Heart left ventricle (tissue), 16 donors: ENCODE measurements at regions of chr2 and their contacts with region 1.

Region 1: GRCh38 chr2:190534310-190535120 is at the start of gene NEMP2:
- DNase-seq: peak; percentile 85 to 92 (median 87)
- ATAC-seq: peak; percentile 76 to 95 (median 90)
- H3K4me3 ChIP-seq: peak within 1 kb of the TSS; percentile 67 to 95 (median 79)
- H3K27ac ChIP-seq: peak within 1 kb of the TSS; percentile 92 to 99 (median 98)
- H3K4me1 ChIP-seq: peaks cover 0 to 41% (median 13%) of the 10 kb centered on the region in 12 donors
- H3K27me3 ChIP-seq: no peaks in the 10 kb centered on the region
- CTCF ChIP-seq: peak in 2 of 12 donors; percentile 10 to 16
- POLR2A ChIP-seq: peak in 1 of 2 donors; percentile 72
- total RNA-seq, gene NEMP2: 0.63 to 4.6 (median 2.4) TPM

Region 2: DNA sequence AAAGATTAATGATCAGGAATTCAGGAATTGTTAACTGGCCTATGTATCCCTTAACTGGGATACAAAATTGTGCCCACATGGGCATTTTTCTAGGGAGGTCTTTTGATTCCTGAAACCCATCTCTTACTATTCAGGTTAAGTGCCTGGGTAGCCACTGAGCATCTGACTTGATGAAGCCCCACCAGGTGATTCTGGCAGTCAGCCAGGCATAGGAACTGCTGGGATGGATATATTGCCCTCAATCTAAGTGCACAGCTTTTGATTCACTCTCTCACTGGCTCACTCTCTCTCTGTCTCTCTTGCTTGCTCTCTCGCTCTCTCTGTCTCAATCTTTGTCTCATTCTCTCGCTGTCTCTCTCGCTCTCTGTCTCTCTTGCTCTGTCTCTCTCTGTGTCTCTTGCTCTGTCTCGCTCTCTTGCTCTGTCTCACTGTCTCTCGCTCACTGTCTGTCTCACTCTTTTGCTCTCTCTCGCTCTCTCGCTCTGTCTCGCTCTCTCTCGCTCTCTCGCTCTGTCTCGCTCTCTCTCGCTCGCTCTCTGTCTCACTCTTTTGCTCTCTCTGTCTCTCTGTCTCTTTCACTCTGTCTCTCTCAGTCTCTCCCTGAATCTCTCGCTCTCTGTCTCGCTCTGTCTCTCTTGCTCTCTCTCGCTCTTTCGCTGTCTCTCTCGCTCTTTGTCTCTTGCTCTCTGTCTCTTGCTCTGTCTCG is 168.9 kb before region 1 on chr2:
- intact Hi-C with region 1: no loop called
- DNase-seq: no peak
- ATAC-seq: no peak
- H3K4me3 ChIP-seq: no peak overlapping the region
- H3K27ac ChIP-seq: no peak overlapping the region
- H3K4me1 ChIP-seq: peaks cover 0 to 2% (median 0%) of the 10 kb centered on the region in 12 donors
- H3K27me3 ChIP-seq: no peaks in the 10 kb centered on the region
- CTCF ChIP-seq: no peak
- POLR2A ChIP-seq: no peak

Region 3: DNA sequence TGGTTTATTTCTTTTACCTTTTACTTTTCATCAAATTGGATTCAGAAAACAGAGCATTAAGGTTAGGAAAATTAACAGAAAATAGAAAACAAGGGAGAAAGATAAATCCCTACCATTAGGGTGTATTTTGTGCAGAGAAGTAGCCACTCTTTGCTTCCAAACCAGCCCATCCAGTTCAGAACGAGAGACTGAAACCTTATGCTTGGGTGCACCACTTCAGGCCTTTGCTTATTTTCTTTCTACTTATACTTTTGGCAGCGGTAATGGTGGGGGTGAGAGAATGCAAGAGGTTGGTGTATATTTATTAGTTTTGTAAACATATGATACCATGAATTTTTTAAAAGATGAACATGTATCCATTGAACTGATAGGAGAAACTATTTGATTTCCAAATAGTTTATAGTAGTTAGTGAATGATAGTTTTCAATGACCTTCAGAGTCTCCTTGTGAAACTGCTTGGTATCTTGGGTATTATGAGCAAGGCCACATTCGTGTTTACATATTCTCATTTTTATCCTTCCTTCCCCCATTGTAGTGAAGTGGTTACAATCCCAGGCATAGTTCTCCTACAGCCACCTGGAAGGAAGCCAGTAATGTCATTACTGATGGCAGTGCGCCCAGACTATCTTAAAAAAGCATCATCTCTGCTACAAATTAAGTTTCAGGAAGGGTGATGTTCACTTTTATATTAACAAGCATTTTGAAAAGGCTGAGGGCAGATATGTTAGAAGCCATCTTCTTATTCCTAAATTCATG is 65.5 kb before region 1 on chr2:
- intact Hi-C with region 1: loop called in 1 of 10 experiments (anchors 2 kb)
- DNase-seq: peak; percentile 72 to 87 (median 82)
- ATAC-seq: peak; percentile 82 to 90 (median 86)
- H3K4me3 ChIP-seq: peak overlapping the region in 5 of 12 donors; percentile 7 to 27 (median 7)
- H3K27ac ChIP-seq: peak overlapping the region; percentile 69 to 91 (median 82)
- H3K4me1 ChIP-seq: peaks cover 17 to 59% (median 40%) of the 10 kb centered on the region in 12 donors
- H3K27me3 ChIP-seq: no peaks in the 10 kb centered on the region
- CTCF ChIP-seq: no peak
- POLR2A ChIP-seq: no peak

Region 4: GRCh38 chr2:190571686-190572085 is 37.2 kb after region 1 on chr2:
- intact Hi-C with region 1: loop called in 2 of 10 experiments (anchors 5 kb)
- DNase-seq: no peak
- ATAC-seq: no peak
- H3K4me3 ChIP-seq: no peak overlapping the region
- H3K27ac ChIP-seq: no peak overlapping the region
- H3K4me1 ChIP-seq: peaks cover 0 to 15% (median 0%) of the 10 kb centered on the region in 12 donors
- H3K27me3 ChIP-seq: no peaks in the 10 kb centered on the region
- CTCF ChIP-seq: no peak
- POLR2A ChIP-seq: no peak

Region 5: GRCh38 chr2:190578158-190579057 is 43.9 kb after region 1 on chr2:
- intact Hi-C with region 1: loop called in 6 of 10 experiments (anchors 2 to 5 kb)
- DNase-seq: peak in 4 of 5 donors; percentile 36 to 56 (median 50)
- ATAC-seq: peak; percentile 71 to 82 (median 76)
- H3K4me3 ChIP-seq: peak overlapping the region in 2 of 12 donors; percentile 1 to 4
- H3K27ac ChIP-seq: peak overlapping the region in 11 of 12 donors; percentile 26 to 68 (median 57)
- H3K4me1 ChIP-seq: peaks cover 0 to 61% (median 33%) of the 10 kb centered on the region in 12 donors
- H3K27me3 ChIP-seq: no peaks in the 10 kb centered on the region
- CTCF ChIP-seq: peak in 2 of 12 donors; percentile 6 to 10
- POLR2A ChIP-seq: no peak

Region 6: DNA sequence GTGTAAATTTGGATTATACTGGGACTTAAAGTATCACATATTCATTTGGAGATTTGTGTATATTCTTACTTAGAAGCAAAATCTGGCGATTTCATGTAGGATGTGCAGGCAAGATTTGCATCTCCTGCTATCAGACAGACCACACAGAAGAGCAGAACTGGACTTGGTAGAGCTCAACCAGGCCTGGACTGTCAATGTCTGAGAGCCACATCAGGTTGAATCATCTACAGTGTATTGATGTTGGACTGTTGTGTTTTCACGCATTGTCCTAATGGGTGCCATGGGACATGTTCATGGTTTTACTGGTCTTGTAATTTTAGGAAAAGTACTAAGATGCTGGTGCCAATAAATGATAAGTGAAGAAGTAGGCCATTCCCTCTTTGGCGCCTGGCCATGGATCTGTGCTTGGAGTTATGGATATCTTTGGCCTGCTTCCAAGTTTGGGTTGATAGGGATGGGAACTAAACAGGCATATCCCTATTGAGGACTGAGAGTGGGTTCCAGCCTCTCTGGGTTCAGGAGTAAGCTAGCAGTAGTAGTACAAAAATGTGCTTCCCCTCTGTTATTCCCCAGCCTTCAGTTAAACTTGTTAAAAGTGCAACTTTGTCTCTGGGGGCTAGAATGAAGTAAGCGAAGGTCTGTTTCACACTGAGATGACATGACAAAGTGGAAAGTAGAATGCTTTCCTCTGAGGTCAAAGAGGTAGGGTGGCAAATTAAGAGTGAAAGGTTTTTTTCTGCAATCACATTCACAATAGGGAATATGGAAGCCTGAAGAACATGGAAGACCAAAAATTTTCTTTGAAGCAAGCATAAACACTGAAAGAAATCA is 49.2 kb after region 1 on chr2:
- intact Hi-C with region 1: loop called in 4 of 10 experiments (anchors 2 to 5 kb)
- DNase-seq: peak; percentile 64 to 86 (median 69)
- ATAC-seq: peak; percentile 25 to 74 (median 38)
- H3K4me3 ChIP-seq: no peak overlapping the region
- H3K27ac ChIP-seq: peak overlapping the region in 11 of 12 donors; percentile 44 to 71 (median 54)
- H3K4me1 ChIP-seq: peaks cover 3 to 52% (median 32%) of the 10 kb centered on the region in 12 donors
- H3K27me3 ChIP-seq: no peaks in the 10 kb centered on the region
- CTCF ChIP-seq: no peak
- POLR2A ChIP-seq: no peak

Region 7: GRCh38 chr2:190648289-190649034 is 113.9 kb after region 1 on chr2:
- intact Hi-C with region 1: loop called (anchors 1 to 10 kb)
- DNase-seq: peak; percentile 95 to 96 (median 95)
- ATAC-seq: peak; percentile 92 to 96 (median 94)
- H3K4me3 ChIP-seq: peak overlapping the region; percentile 72 to 93 (median 82)
- H3K27ac ChIP-seq: peak overlapping the region; percentile 80 to 98 (median 92)
- H3K4me1 ChIP-seq: peaks cover 0 to 49% (median 28%) of the 10 kb centered on the region in 12 donors
- H3K27me3 ChIP-seq: no peaks in the 10 kb centered on the region
- CTCF ChIP-seq: no peak
- POLR2A ChIP-seq: peak; percentile 8 to 79

Region 8: DNA sequence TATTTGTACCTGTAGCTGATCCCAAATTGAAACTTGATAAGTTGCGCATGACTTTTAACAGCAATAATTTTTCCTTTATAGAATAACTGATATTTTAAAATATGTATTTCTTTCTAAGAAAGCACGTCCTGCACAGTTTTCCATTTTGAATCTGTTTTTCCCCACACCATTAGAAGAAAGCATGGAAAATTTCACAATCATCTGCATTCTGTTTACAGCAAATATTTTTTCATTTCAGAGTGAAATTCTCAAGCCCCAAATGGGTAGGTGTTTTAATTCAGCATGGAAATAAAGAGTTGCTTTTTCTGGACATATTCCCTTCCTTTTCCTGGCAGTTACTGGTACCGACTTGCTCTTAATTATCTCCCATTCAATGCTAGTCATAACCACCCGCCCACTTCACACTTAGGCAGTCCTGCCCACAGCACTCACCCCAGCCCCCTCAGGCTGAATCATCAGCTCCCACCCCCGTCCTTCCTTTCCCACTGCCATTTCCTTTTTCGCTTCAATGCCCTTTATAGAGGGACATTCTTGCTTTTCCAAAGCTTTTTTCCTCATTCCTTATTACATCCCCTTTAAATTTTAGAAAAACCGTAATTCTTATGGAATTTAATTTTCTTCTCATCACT is 256.9 kb after region 1 on chr2:
- intact Hi-C with region 1: loop called in 1 of 10 experiments (anchors 10 kb)
- DNase-seq: peak in 4 of 5 donors; percentile 29 to 76 (median 63)
- ATAC-seq: peak; percentile 61 to 93 (median 90)
- H3K4me3 ChIP-seq: no peak overlapping the region
- H3K27ac ChIP-seq: peak overlapping the region in 7 of 12 donors; percentile 19 to 68 (median 53)
- H3K4me1 ChIP-seq: peaks cover 0 to 33% (median 14%) of the 10 kb centered on the region in 12 donors
- H3K27me3 ChIP-seq: no peaks in the 10 kb centered on the region
- CTCF ChIP-seq: no peak
- POLR2A ChIP-seq: no peak